Heart left ventricle (tissue), 16 donors: ENCODE measurements at regions of chr9 and their contacts with region 1.

Region 1: DNA sequence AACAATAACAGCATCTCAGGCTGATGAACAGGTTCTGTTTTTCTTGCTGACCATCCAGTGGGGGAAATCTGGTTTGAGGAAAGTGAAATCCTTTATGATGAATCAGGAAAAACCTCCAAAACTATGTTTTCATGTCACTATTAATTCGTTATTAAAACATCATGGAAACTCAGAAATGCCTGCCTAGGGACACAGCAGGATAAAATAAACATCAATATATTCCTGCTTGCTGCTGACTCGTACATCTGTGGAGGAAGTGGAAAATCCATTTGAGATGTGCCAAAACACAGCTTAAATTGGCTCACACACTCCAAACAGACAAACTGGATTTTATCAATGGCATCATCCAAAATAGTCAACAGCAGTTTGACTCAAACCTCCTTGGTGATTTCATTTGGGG is 53.0 kb downstream of the TEK start:
- DNase-seq: no peak
- ATAC-seq: no peak
- H3K4me3 ChIP-seq: no peak overlapping the region
- H3K27ac ChIP-seq: no peak overlapping the region
- H3K4me1 ChIP-seq: peaks cover 0 to 12% (median 0%) of the 10 kb centered on the region in 12 donors
- H3K27me3 ChIP-seq: no peaks in the 10 kb centered on the region
- CTCF ChIP-seq: no peak
- POLR2A ChIP-seq: no peak

Region 2: DNA sequence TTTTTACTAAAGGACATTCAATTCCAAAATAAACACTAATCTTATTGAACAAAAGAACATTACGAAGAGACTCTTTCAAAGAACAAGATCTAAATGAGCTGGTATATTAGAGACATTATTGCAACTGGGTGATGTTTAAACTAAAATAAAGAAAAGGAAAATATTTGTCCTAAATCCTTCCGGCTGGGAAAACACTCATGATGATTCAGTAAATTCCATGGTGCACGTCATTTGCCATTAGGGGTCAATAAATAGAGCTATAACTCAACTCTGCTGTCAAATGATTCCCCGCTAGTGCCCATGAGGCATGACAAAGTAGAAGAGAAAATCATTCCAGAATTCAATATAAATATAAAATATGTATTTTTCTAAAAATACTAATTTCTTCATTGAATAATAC is 918.3 kb before region 1 on chr9:
- intact Hi-C with region 1: no loop called
- DNase-seq: no peak
- ATAC-seq: no peak
- H3K4me3 ChIP-seq: no peak overlapping the region
- H3K27ac ChIP-seq: no peak overlapping the region
- H3K4me1 ChIP-seq: no peaks in the 10 kb centered on the region
- H3K27me3 ChIP-seq: no peaks in the 10 kb centered on the region
- CTCF ChIP-seq: no peak
- POLR2A ChIP-seq: no peak

Region 3: GRCh38 chr9:27108981-27109541 is 53.0 kb before region 1 on chr9 and contains the start of gene TEK:
- intact Hi-C with region 1: no loop called
- DNase-seq: peak in 1 of 5 donors; percentile 19
- ATAC-seq: peak; percentile 39 to 68 (median 57)
- H3K4me3 ChIP-seq: peak within 1 kb of the TSS; percentile 1 to 64 (median 52)
- H3K27ac ChIP-seq: peak within 1 kb of the TSS; percentile 19 to 88 (median 73)
- H3K4me1 ChIP-seq: peaks cover 0 to 21% (median 0%) of the 10 kb centered on the region in 12 donors
- H3K27me3 ChIP-seq: no peaks in the 10 kb centered on the region
- CTCF ChIP-seq: no peak
- POLR2A ChIP-seq: peak in 1 of 2 donors; percentile 46
- total RNA-seq, gene TEK: 11.9 to 36.5 (median 19.2) TPM

Region 4: DNA sequence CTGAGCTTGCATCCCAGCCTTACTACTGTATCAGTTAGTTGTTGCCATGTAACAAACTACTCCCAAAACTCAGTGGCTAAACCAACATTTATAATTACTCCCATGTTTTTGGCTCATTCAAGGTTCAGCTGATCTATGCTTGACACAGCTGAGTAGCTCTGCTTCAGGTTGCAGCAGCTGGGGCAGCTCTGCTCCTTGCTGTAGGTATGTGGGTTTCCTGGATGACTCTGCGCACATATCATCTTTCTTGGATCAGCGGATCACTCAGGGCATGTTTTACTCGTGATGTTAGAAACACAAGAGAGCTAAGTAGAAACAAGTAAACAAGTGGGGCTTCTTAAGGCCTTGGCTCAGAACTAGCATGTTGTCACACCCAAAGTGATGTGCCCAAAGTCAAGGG is 37.9 kb before region 1 on chr9:
- intact Hi-C with region 1: loop called in 1 of 10 experiments (anchors 5 kb)
- DNase-seq: no peak
- ATAC-seq: no peak
- H3K4me3 ChIP-seq: no peak overlapping the region
- H3K27ac ChIP-seq: peak overlapping the region in 2 of 12 donors; percentile 5 to 9
- H3K4me1 ChIP-seq: peaks cover 0 to 42% (median 21%) of the 10 kb centered on the region in 12 donors
- H3K27me3 ChIP-seq: no peaks in the 10 kb centered on the region
- CTCF ChIP-seq: no peak
- POLR2A ChIP-seq: no peak